ACHN (cell line): ENCODE measurements at regions of chr3 and their contacts with region 1.

Region 1: DNA sequence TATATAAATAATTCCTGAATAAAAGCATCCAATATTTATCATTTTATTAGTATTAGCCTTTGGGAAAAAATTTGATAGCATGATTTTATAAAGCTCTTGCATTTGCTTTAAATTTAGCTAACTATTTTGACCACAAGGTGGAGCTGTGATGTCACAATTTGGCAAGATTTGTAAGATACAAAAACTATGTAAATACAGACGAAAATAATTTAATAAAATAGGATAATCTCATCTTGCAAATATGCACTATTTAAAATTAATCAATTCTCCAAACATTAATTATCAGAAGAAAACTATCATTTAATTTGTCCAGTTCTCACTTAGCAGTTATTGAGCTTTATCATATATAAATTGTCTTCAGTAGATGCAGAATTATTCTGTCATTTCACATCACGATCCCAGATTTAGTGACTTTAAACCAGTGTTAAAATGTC is 95.4 kb downstream of the PLOD2 start:
- DNase-seq: peak; percentile 66

Region 2: DNA sequence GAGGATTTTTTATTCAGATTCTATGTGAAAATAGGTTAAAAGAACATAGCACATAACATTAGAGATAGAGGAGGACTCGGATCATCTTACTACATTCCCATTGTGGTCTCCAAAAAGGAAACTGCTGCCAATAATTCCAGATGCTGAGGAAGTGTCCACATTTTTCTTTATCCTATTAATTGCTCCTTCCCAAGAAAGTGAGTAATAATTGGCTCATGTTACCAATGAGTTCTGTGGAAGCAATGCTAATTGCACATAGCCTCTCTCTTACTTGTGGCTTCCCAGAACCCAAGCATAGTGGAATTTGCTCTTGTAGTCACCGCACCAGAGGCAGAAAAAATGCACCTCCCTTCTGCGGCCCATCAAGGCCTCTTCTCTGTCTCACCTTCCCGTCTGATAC is 113.1 kb before region 1 on chr3:
- in situ Hi-C with region 1: no loop called
- DNase-seq: no peak

Region 3: DNA sequence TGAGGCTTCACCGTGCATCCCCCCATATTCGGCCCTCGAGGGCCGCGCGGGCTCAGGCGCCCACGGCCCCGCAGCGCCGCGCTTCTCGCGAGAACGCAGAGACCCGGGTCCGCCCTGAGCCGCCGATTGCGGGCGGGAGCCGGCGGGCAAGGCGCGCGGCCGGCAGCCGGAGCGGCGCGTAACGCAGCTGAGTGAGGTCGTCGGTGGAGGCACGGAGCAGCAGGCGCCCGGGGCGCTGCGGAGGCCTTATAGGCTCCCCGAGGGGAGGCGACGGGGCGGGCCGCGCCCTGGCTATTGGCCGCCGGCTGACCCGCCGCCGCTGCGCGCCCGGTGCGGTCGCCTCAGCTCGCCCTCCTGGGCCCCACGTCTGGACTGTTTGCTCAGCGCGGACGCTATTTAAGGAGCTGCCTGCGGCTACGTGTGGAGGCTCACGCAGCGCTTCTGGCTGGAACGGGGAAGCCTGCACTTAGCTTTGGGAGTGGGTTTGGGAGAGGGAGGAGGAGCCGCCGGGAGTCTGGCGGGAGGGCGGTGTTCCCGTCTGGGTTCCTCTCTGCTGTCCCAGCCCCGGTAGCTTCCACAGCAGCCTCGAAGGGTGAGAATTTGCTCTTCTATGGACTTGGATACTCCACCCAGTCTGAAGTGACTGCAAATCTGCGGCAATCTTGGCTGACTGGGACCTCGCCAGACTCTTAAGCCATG is 95.5 kb after region 1 on chr3 and contains the start of gene PLOD2:
- in situ Hi-C with region 1: loop called (anchors 25 kb)
- DNase-seq: peak; percentile 78

Region 4: DNA sequence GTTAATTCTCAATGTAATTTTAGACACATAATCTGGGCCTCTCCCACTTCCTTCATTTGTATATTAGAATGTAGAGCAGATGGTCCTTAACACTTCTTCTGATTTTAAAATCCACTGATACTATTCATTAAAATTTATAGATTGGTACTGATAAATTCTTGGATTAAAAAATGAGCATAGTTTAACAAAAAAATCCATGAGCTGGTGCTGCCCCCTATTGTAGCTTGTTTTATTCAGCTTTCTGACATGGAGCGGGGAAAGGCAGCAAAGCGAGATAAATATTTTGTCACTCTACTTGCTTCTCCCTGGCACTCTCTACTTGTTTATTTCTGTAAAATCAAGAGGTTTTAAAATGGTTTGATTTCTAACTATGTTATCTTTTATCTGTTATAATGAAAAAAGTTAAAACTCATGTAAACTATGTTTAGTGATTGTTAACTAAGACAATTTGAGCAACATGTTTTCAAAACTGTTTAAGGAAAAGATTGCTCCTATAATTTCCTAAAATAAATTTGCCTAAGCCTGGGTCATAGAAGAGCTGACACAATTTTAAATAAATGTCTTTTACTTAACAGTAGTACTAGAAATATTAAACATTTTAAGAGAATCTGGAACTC is 121.9 kb after region 1 on chr3:
- in situ Hi-C with region 1: no loop called
- DNase-seq: peak; percentile 33

Region 5: DNA sequence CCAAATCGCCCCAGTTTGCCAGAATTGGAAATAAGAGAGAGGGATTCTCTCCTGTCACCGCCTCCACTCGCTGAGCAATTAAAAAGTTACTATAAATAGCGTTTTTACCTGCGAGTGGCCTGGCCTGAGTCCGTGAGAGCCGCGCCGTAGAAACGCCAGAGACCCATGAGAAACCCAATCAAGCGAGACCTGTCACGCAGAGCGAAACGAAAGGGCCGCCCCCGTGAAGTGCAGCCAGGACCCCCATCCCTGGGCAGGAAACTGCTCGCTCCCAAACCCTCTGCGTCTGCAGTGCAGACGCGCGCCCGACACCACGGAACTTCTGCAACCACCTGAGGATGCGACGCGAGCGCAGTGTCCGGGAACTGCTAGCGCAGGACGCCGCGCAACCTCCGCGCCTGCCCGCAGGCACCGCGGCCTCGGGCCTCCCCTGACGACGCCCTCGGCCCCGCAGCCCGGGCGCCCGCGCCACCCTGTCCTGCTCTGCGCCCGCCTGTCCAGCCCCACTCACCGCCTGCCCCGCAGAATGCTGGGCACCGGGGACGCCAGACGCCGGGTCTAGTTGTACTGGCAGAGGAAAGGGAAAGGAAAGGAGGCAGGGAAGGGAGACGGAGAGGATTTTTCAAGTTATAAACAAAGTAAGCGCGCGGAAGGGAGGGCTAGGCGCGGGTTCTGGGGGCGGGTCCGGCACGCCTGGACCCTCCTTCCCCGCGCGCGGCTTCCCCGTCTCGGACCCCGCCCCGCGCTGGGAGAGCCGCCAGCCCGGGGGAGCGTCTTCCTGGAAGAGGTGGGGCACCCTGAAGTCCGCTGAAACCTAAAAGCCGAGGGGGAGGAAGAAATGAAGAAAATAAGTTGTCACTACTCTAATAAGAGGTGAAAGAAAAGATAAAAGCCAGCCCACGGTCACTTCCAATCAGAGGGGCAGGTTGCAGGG is 185.1 kb after region 1 on chr3 and contains the start of gene PLSCR4:
- in situ Hi-C with region 1: no loop called
- DNase-seq: peak; percentile 71

Region 6: GRCh38 chr3:146326670-146327543 is 261.3 kb after region 1 on chr3:
- in situ Hi-C with region 1: no loop called
- DNase-seq: peak; percentile 43